GM23248 (cell line): ENCODE measurements at regions of chr7 and their contacts with region 1.

Region 1: GRCh38 chr7:84484502-84485079 is 290.0 kb upstream of the SEMA3A start:
- DNase-seq: peak; percentile 28
- H3K4me3 ChIP-seq: no peak overlapping the region
- H3K27ac ChIP-seq: no peak overlapping the region
- H3K4me1 ChIP-seq: peaks cover 6% of the 10 kb centered on the region; the same call in 1 of the 2 replicates
- H3K27me3 ChIP-seq: no peaks in the 10 kb centered on the region

Region 2: DNA sequence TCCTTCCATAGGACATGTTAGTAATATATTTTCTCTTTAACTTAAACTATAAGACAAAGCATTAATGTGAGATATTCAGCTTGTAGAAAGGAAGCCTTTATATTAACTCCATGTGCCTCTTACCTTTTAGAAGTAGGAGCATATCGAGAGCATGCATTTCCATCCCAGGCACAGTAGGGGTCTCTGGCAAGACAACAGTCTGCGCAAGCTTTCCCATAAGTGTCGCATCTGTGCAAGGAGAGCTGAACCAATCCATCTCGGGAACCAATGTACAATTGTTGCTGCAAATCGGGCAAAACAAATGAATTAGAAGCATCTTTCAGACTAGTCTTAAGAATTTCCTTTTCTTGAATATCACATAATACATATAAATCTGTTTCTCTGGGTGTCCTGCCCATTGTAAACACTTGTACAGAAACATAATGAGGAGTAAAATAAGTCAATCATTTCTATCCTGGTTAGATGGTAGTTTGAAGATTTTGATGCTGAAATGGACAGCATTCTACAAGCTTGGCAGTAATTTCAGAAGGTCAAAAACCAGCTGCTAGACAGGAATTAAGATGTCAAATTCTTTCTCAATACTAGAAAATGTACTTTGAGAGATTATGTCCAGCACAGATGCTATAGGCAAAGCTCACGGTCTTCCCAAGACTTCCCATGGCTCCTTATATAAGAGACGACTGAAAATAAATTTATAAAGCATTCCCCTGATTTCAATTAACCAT is 530.5 kb after region 1 on chr7:
- in situ Hi-C with region 1: loop called (anchors 5 kb)
- DNase-seq: no peak
- H3K4me3 ChIP-seq: no peak overlapping the region
- H3K27ac ChIP-seq: no peak overlapping the region
- H3K4me1 ChIP-seq: no peaks in the 10 kb centered on the region
- H3K27me3 ChIP-seq: no peaks in the 10 kb centered on the region

Region 3: DNA sequence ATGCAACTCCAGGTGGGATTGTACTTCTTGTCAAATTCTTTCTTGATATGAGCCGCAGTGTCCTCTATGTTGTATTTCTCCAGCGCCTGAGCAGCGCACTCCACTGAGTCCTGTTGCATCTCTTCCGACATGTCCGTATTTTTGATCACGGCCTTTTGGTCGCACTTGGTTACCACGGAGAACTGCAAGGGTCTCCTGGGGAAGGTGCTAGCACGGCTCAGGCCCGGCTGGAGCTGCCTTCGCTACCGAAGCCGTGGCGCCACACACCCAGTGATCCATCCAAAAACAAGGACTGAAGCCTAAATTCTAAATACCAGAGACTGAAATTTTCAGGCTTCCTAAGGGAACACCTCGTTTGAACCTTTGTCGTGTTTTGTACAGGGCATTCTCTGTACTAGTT is 896.6 kb after region 1 on chr7:
- in situ Hi-C with region 1: no loop called
- DNase-seq: no peak
- H3K4me3 ChIP-seq: no peak overlapping the region
- H3K27ac ChIP-seq: no peak overlapping the region
- H3K4me1 ChIP-seq: no peaks in the 10 kb centered on the region
- H3K27me3 ChIP-seq: no peaks in the 10 kb centered on the region